PC-3 (cell line): ENCODE measurements at regions of chr12 and their contacts with region 1.

Region 1: GRCh38 chr12:108618079-108618952 is 15.4 kb downstream of the SELPLG start:
- DNase-seq: peak; percentile 91
- ATAC-seq: peak; percentile 98
- H3K4me3 ChIP-seq: no peak overlapping the region
- H3K27ac ChIP-seq: no peak overlapping the region
- H3K4me1 ChIP-seq: peaks cover 11% of the 10 kb centered on the region
- H3K27me3 ChIP-seq: no peaks in the 10 kb centered on the region
- CTCF ChIP-seq: peak; percentile 99

Region 2: GRCh38 chr12:107912421-107913004 is 705.8 kb before region 1 on chr12:
- CTCF ChIA-PET with region 1: no interaction called
- POLR2A ChIA-PET with region 1: no interaction called
- intact Hi-C with region 1: loop called (anchors 10 kb)
- DNase-seq: peak; percentile 55
- ATAC-seq: peak; percentile 42
- H3K4me3 ChIP-seq: no peak overlapping the region
- H3K27ac ChIP-seq: no peak overlapping the region
- H3K4me1 ChIP-seq: no peaks in the 10 kb centered on the region
- H3K27me3 ChIP-seq: peaks cover 51% of the 10 kb centered on the region
- CTCF ChIP-seq: peak; percentile 91

Region 3: DNA sequence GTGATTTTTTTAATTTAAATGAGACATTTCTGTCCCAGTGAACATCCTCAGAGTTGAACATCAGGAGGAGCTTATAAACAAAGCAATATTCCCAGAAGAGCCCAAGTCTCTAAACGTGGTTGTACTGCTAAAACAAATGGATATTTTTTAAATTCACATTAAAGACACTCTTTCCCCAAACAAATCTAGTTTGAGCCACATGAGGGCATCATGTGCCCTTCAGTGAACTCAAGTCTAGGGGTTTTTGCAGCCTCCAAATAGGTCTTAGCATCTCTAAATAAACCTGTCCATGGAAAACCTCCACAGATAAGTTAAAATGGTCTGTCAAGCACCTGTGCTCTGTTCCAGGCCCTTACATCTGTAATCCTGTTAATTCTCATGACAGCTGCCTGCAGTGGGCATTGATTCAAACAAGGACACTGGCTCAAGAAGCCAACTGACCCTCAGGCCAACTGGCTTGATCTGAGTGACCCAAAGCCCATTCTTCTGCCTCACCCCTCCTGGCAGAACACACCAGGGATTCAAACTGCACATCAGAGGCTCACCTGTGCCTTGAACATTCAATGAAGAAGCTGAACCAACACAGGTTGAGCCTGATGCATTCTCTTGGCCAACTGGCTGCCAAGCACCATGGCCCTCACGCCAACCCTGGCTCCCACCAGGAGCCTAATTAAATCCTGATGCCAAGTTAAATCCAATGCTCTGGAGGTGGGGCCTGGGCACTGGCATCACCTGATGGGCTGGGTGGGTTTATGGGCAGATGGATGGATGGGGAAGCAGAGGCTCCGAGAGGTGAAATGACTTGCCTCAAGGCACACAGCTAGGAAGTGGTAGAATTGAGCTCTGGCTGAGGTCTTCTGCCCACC is 47.3 kb before region 1 on chr12:
- CTCF ChIA-PET with region 1: interaction called, 7 read pairs
- POLR2A ChIA-PET with region 1: no interaction called
- intact Hi-C with region 1: loop called (anchors 1 kb)
- DNase-seq: peak; percentile 51
- ATAC-seq: peak; percentile 24
- H3K4me3 ChIP-seq: no peak overlapping the region
- H3K27ac ChIP-seq: no peak overlapping the region
- H3K4me1 ChIP-seq: peaks cover 6% of the 10 kb centered on the region
- H3K27me3 ChIP-seq: no peaks in the 10 kb centered on the region
- CTCF ChIP-seq: peak; percentile 61

Region 4: DNA sequence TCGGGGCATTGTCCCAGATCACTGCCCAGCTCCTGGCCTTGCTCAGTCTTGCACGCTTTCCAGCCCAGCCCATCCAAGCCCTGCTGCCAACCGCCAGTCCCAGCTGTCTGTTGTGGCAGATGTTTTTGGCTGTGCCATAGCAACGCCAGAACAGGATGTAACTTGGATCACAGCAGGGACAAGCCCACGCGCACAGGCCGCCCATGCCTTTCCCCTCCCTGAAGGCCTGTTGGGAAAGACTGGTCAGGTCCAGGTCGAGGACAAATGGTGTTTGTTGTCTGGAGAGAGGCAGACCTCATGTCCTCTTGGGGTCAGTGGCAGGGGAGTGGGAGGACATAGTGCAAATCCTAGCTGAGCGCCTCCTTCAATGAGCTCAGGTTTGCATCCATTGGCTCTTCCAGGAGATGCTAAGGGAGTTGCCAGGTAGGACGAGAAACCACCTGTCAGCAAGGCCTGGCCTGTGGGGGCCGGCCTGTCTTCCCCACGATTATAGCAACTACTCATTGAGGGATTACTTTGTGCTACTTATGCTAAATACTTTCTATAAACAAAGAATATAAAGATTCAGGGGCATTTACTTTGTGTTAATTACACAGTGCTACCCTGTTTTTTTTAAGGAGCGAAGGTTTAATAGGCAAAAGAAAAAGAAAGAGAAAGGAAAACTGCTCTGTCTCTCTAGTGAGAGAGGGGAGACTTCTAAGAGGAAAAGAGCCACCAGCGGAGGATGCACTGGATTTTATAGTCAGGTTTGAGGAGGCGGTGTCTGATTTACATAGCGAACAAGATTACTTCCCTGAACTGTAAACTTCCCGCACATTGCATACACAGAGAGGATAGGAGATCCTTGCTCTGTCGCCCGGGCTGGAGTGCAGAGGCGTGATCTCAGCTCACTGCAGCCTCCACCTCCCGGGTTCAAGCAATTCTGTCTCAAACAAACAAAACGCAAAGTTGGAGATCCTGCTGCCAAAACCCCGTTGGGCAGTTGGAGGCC is 155.8 kb after region 1 on chr12:
- CTCF ChIA-PET with region 1: no interaction called
- POLR2A ChIA-PET with region 1: no interaction called
- intact Hi-C with region 1: no loop called
- DNase-seq: no peak
- ATAC-seq: peak; percentile 30
- H3K4me3 ChIP-seq: no peak overlapping the region
- H3K27ac ChIP-seq: no peak overlapping the region
- H3K4me1 ChIP-seq: no peaks in the 10 kb centered on the region
- H3K27me3 ChIP-seq: no peaks in the 10 kb centered on the region
- CTCF ChIP-seq: no peak

Region 5: GRCh38 chr12:108907476-108908351 is 289.4 kb after region 1 on chr12:
- CTCF ChIA-PET with region 1: no interaction called
- POLR2A ChIA-PET with region 1: no interaction called
- intact Hi-C with region 1: no loop called
- DNase-seq: peak; percentile 55
- ATAC-seq: peak; percentile 57
- H3K4me3 ChIP-seq: no peak overlapping the region
- H3K27ac ChIP-seq: no peak overlapping the region
- H3K4me1 ChIP-seq: peaks cover 10% of the 10 kb centered on the region
- H3K27me3 ChIP-seq: no peaks in the 10 kb centered on the region
- CTCF ChIP-seq: no peak